Activated T-helper 2 cell treated with anti-CD3 and anti-CD28 coated beads, Interferon-gamma antibody, Interleukin-2, Interleukin-4, amounts not matched to agents 10 μg/mL and 5 μg/mL and 100 μg/mL, durations not matched to agents 14 hours and 24 hours and 36 hours (primary cell): ENCODE measurements at regions of chr16 and their contacts with region 1.

Region 1: DNA sequence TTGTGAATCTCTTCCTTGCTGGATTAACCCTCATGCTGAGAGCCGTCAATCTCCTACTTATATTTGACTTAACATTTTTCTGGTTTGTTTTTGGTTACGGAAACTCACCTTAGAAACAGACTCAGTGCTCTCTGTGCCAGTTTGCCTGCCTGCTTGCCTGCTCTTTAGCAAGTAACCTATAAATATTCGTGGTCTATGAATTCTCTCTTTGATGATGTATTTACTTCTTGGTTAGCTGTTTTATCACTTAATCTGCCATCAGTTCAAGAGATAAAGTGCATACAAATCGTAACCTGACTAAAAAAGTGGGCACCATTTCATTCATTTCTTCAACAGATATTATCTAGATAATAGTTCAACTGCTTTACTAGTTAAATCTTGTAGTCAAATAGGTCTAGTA is 26.7 kb downstream of the CYB5B start:
- DNase-seq: no peak
- H3K4me3 Mint-ChIP-seq: peak overlapping the region; percentile 27
- H3K27ac Mint-ChIP-seq: peak overlapping the region; percentile 83
- H3K4me1 Mint-ChIP-seq: peaks cover 42% of the 10 kb centered on the region
- H3K27me3 Mint-ChIP-seq: no peaks in the 10 kb centered on the region

Region 2: DNA sequence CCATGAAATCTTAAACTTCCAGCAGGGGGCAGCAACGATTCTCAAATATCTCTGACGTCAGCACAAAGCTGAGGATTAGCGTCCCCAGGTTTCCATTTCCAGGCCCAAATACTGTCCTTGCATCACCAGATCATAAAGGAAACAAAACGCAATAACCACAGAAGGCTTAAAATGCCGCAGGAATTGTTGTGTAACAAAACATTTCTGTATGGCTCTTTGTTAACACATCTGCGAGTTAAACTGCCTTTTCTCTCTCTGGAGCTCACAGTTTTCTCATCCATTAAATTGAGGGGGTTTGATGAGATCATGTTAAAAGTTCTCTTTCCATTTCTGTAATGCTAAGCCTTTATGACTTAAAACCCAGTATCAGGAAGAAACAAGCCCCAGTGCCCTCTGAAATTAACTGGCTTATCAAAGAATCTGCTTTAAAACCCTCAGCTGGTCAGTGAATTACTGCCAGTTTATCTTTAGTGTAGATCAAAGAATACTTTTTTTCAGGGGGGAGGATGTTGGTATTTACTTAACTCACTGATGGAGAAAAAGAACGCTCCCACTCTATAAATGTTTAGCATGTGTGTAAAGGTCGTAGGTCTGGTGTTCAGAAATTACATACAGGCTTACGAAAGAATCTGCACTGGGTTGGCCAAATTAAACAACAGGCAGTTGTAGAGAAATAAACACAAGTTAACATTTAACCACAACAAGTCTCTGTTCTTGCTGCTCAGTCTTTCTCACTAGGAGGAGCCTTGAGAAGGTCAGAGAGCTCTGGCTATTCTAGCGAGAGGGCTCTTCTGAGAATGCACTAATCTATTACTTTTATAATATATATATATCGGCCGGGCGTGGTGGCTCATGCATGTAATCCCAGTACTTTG is 54.7 kb before region 1 on chr16:
- intact Hi-C with region 1: loop called (anchors 1 kb)
- DNase-seq: peak; percentile 57
- H3K4me3 Mint-ChIP-seq: no peak overlapping the region
- H3K27ac Mint-ChIP-seq: peak overlapping the region; percentile 61
- H3K4me1 Mint-ChIP-seq: peaks cover 27% of the 10 kb centered on the region
- H3K27me3 Mint-ChIP-seq: peaks cover 5% of the 10 kb centered on the region

Region 3: DNA sequence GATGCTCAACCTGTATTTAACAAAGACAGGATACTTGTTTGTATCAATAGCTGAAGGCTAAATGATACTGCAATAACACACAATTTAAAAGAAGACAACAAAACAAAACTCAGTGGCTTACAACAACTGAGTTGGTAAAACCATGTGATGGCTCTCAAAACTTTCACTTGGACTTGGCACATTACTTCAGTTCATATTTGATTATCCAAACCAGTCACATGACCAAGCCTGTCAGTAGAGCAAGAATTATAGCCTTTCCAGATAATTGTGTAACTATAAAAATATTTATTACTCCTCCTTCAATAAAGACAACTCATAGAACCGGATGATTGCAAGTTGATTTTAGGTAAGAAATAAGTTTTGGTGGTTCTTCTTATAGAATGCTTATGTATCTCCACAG is 218.4 kb after region 1 on chr16:
- intact Hi-C with region 1: no loop called
- DNase-seq: no peak
- H3K4me3 Mint-ChIP-seq: no peak overlapping the region
- H3K27ac Mint-ChIP-seq: no peak overlapping the region
- H3K4me1 Mint-ChIP-seq: peaks cover 4% of the 10 kb centered on the region
- H3K27me3 Mint-ChIP-seq: no peaks in the 10 kb centered on the region